BJ (cell line): ENCODE measurements at regions of chr6 and their contacts with region 1.

Region 1: GRCh38 chr6:16999491-17000436 is 102.1 kb upstream of the STMND1 start:
- DNase-seq: peak; percentile 86
- H3K4me3 ChIP-seq: no peak overlapping the region
- H3K27me3 ChIP-seq: no peaks in the 10 kb centered on the region
- CTCF ChIP-seq: no peak

Region 2: GRCh38 chr6:15735567-15736265 is 1264.0 kb before region 1 on chr6:
- CTCF ChIA-PET with region 1: no interaction called
- POLR2A ChIA-PET with region 1: no interaction called
- DNase-seq: no peak
- H3K4me3 ChIP-seq: no peak overlapping the region
- H3K27me3 ChIP-seq: no peaks in the 10 kb centered on the region; the same call in 1 of the 2 replicates
- CTCF ChIP-seq: no peak

Region 3: GRCh38 chr6:16982807-16983206 is 17.0 kb before region 1 on chr6:
- CTCF ChIA-PET with region 1: interaction called, 15 read pairs
- POLR2A ChIA-PET with region 1: interaction called, 3 read pairs
- DNase-seq: peak; percentile 76
- H3K4me3 ChIP-seq: no peak overlapping the region
- H3K27me3 ChIP-seq: no peaks in the 10 kb centered on the region; the same call in 1 of the 2 replicates
- CTCF ChIP-seq: no peak

Region 4: DNA sequence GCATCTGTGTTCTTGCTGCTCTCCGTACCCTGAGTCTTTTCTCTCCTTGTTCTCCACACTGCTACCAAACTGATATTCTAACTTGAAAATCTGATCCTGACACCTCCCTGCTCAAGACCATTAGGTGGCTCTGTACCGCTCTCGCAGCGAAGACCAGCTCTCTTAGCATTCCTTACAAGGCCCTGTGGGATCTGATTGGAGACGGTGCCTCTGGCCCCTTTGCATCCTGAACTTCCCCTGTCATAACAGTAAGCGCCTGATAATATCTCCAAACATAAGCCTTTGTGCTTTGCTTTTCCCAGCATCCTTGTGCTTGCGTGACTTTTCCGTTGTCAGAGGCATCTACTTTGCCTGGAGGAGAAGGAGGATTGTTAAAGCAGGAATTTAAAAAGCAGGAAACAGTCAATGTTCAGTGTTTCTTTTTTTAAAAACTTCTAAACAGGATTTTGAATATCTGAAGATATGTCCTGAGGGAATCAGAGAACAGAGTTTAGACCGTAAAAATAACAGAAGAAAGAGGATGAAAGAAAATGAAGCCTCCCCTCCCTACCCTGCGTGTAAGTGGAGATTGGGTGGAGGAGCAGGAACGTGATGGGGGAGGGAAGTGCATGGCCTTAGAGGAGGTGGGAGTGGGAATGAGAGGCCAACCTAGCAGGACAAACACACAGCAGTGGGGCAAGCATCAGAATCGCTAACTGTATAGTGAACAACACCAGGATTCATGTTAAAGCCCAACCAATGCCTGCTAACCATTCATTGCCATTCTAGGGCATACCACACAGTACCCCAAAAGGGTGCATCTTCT is 12.9 kb after region 1 on chr6:
- CTCF ChIA-PET with region 1: interaction called, 11 read pairs
- POLR2A ChIA-PET with region 1: interaction called, 3 read pairs
- DNase-seq: peak; percentile 92
- H3K4me3 ChIP-seq: peak overlapping the region; percentile 32
- H3K27me3 ChIP-seq: no peaks in the 10 kb centered on the region
- CTCF ChIP-seq: peak; percentile 52